Gastrocnemius medialis (tissue), 4 donors: ENCODE measurements at regions of chr19 and their contacts with region 1.

Region 1: GRCh38 chr19:47391510-47392223 is 27.7 kb downstream of the MEIS3 start:
- DNase-seq: peak in 1 of 2 donors; percentile 42
- ATAC-seq: peak; percentile 60 to 62
- H3K4me3 ChIP-seq: no peak overlapping the region
- H3K27ac ChIP-seq: no peak overlapping the region
- H3K4me1 ChIP-seq: no peaks in the 10 kb centered on the region
- H3K27me3 ChIP-seq: peaks cover 0 to 7% (median 4%) of the 10 kb centered on the region in 3 donors
- CTCF ChIP-seq: peak; percentile 72 to 85 (median 80)
- POLR2A ChIP-seq: no peak

Region 2: DNA sequence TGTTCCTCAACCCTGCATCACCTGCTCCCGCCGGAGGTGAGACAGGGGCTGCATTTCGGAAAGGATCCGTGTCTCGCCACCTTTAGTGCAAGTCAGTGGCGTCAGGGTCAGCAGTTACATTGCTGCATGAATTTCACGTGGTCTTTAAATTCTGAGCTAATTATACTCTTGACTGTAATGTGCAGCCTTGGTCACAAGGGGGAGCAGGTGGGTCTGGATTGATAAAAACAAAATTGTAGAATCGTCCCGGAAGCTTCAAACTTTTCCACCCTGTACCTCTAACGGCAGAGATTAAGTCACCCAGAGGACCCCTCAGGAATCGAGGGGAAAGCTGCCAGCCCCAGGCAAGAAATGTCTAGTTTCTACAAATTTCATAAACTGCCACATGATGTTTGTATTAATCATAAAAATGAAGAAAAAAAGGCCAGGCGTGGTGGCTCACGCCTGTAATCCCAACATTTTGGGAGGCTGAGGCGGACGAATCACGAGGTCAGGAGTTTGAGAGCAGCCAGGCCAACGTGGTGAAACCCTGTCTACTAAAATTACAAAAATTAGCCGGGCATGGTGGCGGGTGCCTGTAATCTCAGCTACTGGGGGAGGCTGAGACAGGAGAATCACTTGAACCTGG is 180.9 kb before region 1 on chr19:
- in situ Hi-C with region 1: no loop called
- intact Hi-C with region 1: loop called (anchors 5 kb)
- DNase-seq: peak; percentile 63 to 81
- ATAC-seq: peak; percentile 94 to 95
- H3K4me3 ChIP-seq: no peak overlapping the region
- H3K27ac ChIP-seq: peak overlapping the region in 3 of 4 donors; percentile 48 to 71 (median 51)
- H3K4me1 ChIP-seq: peaks cover 4 to 6% of the 10 kb centered on the region in 2 donors
- H3K27me3 ChIP-seq: no peaks in the 10 kb centered on the region
- CTCF ChIP-seq: peak; percentile 81 to 93 (median 88)
- POLR2A ChIP-seq: no peak

Region 3: GRCh38 chr19:47284324-47284899 is 107.3 kb before region 1 on chr19:
- in situ Hi-C with region 1: no loop called
- intact Hi-C with region 1: no loop called
- DNase-seq: no peak
- ATAC-seq: peak; percentile 33 to 47
- H3K4me3 ChIP-seq: no peak overlapping the region
- H3K27ac ChIP-seq: no peak overlapping the region
- H3K4me1 ChIP-seq: peaks cover 5 to 6% of the 10 kb centered on the region in 2 donors
- H3K27me3 ChIP-seq: no peaks in the 10 kb centered on the region
- CTCF ChIP-seq: peak; percentile 70 to 91 (median 80)
- POLR2A ChIP-seq: no peak